HepG2 (cell line): ENCODE measurements at regions of chr5 and their contacts with region 1.

Region 1: DNA sequence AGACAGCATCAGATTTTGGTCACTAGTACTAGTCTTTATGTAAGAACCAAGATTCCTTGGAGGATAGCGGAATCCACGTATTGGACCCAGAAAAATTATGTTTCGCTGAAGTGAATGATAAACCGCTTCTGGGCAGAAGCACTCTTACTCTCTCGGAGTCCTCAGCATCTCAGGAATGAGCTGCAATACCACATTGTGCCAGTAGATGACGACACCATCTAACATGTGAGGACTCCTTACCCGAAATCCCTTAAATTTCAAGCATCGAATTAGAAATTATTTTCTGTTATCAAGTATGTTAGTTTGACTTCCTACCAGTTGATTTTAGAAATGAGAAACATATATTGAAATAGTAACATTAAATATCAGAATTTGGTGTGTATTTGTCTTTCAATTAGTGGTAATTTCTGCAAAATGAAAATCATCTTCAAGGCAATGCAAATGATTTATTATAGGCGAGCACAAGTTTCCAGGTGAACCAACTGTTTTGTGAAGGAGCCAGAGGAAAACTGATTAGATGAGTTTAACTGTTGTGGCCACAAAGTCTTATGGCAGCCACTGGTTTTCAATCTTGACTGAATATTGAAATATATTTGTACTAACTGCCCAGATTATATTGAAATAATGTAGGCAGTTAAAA is 66.0 kb upstream of the CAMK4 start:
- DNase-seq: peak; percentile 56
- ATAC-seq: peak; percentile 78
- H3K4me3 ChIP-seq: no peak overlapping the region
- H3K27ac ChIP-seq: no peak overlapping the region
- H3K4me1 ChIP-seq: no peaks in the 10 kb centered on the region
- H3K27me3 ChIP-seq: no peaks in the 10 kb centered on the region
- CTCF ChIP-seq: peak; percentile 85
- EP300 ChIP-seq: no peak
- POLR2A ChIP-seq: no peak
- RAD21 ChIP-seq: peak; percentile 67

Region 2: GRCh38 chr5:111278845-111279504 is 120.8 kb after region 1 on chr5:
- CTCF ChIA-PET with region 1: interaction called, 28 read pairs
- POLR2A ChIA-PET with region 1: no interaction called
- in situ Hi-C with region 1: loop called (anchors 5 kb)
- intact Hi-C with region 1: loop called (anchors 1 kb)
- DNase-seq: peak; percentile 45
- ATAC-seq: peak; percentile 97
- H3K4me3 ChIP-seq: no peak overlapping the region
- H3K27ac ChIP-seq: no peak overlapping the region
- H3K4me1 ChIP-seq: 0 out of 2 replicates have a peak, but pooled peaks cover 4% of the 10 kb centered on the region
- H3K27me3 ChIP-seq: no peaks in the 10 kb centered on the region
- CTCF ChIP-seq: peak; percentile 77
- EP300 ChIP-seq: no peak
- POLR2A ChIP-seq: no peak
- RAD21 ChIP-seq: peak; percentile 60

Region 3: DNA sequence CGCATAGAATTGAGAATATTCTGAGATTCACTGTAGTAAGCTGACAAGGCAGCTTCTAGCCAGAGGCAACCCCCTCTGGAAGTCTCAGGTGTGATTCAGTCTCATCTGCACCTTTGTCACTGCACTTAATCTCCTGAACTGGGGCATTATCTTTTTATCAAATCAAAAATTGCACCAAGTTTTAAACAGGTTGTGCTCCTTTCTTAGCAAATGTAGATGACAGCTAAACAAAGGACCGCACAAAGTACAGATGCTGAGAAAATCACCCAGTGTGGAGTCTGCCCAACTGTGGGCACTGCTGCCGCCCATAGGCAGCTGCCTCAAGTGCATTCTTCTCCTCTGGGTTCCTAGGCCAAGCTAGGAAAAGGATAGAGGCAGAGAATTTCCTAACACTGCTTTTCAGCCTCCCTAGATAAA is 303.0 kb after region 1 on chr5:
- CTCF ChIA-PET with region 1: no interaction called
- POLR2A ChIA-PET with region 1: no interaction called
- in situ Hi-C with region 1: no loop called
- intact Hi-C with region 1: loop called (anchors 5 kb)
- DNase-seq: no peak
- ATAC-seq: peak; percentile 93
- H3K4me3 ChIP-seq: no peak overlapping the region
- H3K27ac ChIP-seq: no peak overlapping the region
- H3K4me1 ChIP-seq: no peaks in the 10 kb centered on the region
- H3K27me3 ChIP-seq: no peaks in the 10 kb centered on the region
- CTCF ChIP-seq: peak; percentile 47
- EP300 ChIP-seq: no peak
- POLR2A ChIP-seq: no peak
- RAD21 ChIP-seq: no peak

Region 4: DNA sequence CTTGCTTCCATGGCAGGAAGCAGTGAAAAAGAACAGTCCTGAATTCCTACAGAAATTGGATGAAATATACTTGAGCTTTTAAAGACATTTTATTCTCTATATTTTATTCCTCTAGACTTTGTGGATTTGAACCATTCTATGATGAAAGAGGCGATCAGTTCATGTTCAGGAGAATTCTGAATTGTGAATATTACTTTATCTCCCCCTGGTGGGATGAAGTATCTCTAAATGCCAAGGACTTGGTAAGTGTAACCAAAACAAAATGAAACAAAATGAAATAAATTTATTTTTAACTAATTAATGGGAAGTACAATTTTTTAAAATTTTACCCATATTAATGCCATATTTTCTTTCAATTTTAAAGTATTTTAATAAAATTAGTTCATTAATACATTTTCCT is 320.0 kb after region 1 on chr5:
- CTCF ChIA-PET with region 1: no interaction called
- POLR2A ChIA-PET with region 1: no interaction called
- in situ Hi-C with region 1: loop called (anchors 25 kb)
- intact Hi-C with region 1: loop called (anchors 1 kb)
- DNase-seq: no peak
- ATAC-seq: no peak
- H3K4me3 ChIP-seq: no peak overlapping the region
- H3K27ac ChIP-seq: no peak overlapping the region
- H3K4me1 ChIP-seq: no peaks in the 10 kb centered on the region
- H3K27me3 ChIP-seq: no peaks in the 10 kb centered on the region; a peak in 2 of 5 replicates
- CTCF ChIP-seq: no peak
- EP300 ChIP-seq: no peak
- POLR2A ChIP-seq: no peak
- RAD21 ChIP-seq: no peak